H1 (cell line): ENCODE measurements at regions of chr1 and their contacts with region 1.

Region 1: GRCh38 chr1:176374967-176375569 is 87.9 kb upstream of the PAPPA2 start:
- DNase-seq: peak; percentile 58 to 93
- H3K4me3 ChIP-seq: no peak overlapping the region
- H3K27ac ChIP-seq: no peak overlapping the region
- H3K4me1 ChIP-seq: no peaks in the 10 kb centered on the region
- H3K27me3 ChIP-seq: no peaks in the 10 kb centered on the region
- CTCF ChIP-seq: peak; percentile 71 to 93 (median 93)
- EP300 ChIP-seq: no peak
- POLR2A ChIP-seq: no peak
- RAD21 ChIP-seq: peak; percentile 98 to 100

Region 2: GRCh38 chr1:176263278-176263677 is 111.8 kb before region 1 on chr1:
- CTCF ChIA-PET with region 1: no interaction called
- POLR2A ChIA-PET with region 1: no interaction called
- DNase-seq: no peak
- H3K4me3 ChIP-seq: no peak overlapping the region
- H3K27ac ChIP-seq: no peak overlapping the region
- H3K4me1 ChIP-seq: no peaks in the 10 kb centered on the region
- H3K27me3 ChIP-seq: no peaks in the 10 kb centered on the region
- CTCF ChIP-seq: no peak
- EP300 ChIP-seq: no peak
- POLR2A ChIP-seq: no peak
- RAD21 ChIP-seq: no peak

Region 3: DNA sequence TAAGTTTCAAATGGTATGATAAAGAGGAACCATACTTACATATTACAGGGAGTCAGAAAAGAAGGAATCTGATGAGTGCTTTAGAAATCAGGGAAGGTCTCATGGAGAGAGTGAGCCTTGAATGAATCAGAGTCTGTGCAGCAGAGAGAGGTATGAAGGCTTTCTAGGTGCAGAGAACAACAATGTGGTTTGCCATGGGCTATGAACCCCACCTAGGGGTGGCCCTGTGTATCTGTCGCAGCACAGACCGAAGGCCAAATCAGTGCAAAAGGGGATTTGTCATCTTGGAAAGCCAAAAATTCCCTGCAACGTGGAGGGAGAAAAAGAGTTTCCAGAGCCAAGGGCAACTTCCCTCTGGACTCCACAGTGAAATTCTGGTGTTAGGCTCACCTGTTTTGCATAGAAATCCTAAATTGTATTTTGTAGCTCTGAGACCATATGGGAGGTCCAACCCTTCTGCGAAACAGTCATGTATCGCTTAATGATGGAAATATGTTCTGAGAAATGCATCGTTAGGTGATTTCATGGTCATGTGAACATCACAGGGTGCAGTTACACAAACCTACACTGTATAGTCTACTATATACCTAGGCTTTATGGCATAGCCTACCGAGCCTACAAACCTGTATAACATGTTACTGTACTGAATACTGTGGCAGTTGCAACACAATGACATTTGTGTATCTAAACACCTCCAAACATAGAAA is 91.6 kb after region 1 on chr1:
- CTCF ChIA-PET with region 1: interaction called, 14 read pairs
- POLR2A ChIA-PET with region 1: no interaction called
- DNase-seq: peak in 1 of 2 experiments; percentile 19
- H3K4me3 ChIP-seq: no peak overlapping the region
- H3K27ac ChIP-seq: no peak overlapping the region
- H3K4me1 ChIP-seq: no peaks in the 10 kb centered on the region
- H3K27me3 ChIP-seq: no peaks in the 10 kb centered on the region
- CTCF ChIP-seq: peak; percentile 80 to 90 (median 85)
- EP300 ChIP-seq: no peak
- POLR2A ChIP-seq: no peak
- RAD21 ChIP-seq: peak; percentile 86 to 92